OCI-LY7 (cell line): ENCODE measurements at regions of chr15 and their contacts with region 1.

Region 1: DNA sequence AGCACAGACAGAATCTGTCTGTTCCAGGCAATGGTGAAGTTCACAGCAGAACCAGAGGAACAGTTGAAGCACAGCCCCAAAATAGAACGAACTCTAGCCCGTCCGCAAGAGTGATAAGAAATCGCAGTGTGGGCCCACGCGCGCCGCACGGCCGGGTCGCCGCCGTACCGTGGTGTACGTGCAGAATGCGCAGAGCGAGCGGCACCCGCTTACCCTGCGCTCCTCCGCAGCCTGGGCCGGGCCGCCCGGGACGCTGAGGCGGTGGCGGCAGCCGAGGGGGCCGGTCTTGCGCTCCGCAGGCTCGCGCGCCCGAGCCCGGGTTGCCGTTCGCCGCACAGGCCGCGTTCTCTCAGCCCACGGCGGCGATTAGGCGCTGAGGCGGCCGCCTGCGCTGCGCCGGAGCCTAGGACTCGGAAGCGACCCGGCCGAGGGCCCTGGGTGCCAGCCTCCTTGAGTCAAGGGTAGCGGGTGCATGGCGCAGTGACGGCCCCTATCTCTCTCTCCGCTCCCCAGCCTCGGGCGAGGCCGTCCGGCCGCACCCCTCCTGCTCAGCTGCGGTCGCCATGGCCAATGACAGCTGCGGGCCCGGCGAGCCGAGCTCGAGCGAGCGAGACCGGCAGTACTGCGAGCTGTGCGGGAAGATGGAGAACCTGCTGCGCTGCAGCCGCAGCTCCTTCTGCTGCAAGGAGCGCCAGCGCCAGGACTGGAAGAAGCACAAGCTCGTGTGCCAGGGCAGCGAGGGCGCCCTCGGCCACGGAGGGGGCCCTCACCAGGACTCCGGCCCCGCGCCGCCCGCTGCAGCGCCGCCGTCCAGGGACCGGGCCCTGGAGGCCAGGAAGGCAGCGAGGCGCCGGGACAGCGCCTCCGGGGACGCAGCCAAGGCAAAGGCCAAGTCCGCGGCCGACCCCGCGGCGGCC is 20.5 kb downstream of the WDR73 start:
- DNase-seq: peak; percentile 79
- H3K4me3 ChIP-seq: peak overlapping the region; percentile 76
- H3K27ac ChIP-seq: peak overlapping the region; percentile 18
- H3K4me1 ChIP-seq: peaks cover 40% of the 10 kb centered on the region
- CTCF ChIP-seq: 0 out of 2 replicates have a peak, but pooled peaks have one; percentile 16

Region 2: GRCh38 chr15:84570164-84570735 is 63.3 kb before region 1 on chr15:
- CTCF ChIA-PET with region 1: interaction called, 3 read pairs
- POLR2A ChIA-PET with region 1: no interaction called
- intact Hi-C with region 1: loop called (anchors 1 kb)
- DNase-seq: peak; percentile 27
- H3K4me3 ChIP-seq: peak overlapping the region; percentile 73
- H3K27ac ChIP-seq: peak overlapping the region; percentile 25
- H3K4me1 ChIP-seq: no peaks in the 10 kb centered on the region
- CTCF ChIP-seq: no peak

Region 3: DNA sequence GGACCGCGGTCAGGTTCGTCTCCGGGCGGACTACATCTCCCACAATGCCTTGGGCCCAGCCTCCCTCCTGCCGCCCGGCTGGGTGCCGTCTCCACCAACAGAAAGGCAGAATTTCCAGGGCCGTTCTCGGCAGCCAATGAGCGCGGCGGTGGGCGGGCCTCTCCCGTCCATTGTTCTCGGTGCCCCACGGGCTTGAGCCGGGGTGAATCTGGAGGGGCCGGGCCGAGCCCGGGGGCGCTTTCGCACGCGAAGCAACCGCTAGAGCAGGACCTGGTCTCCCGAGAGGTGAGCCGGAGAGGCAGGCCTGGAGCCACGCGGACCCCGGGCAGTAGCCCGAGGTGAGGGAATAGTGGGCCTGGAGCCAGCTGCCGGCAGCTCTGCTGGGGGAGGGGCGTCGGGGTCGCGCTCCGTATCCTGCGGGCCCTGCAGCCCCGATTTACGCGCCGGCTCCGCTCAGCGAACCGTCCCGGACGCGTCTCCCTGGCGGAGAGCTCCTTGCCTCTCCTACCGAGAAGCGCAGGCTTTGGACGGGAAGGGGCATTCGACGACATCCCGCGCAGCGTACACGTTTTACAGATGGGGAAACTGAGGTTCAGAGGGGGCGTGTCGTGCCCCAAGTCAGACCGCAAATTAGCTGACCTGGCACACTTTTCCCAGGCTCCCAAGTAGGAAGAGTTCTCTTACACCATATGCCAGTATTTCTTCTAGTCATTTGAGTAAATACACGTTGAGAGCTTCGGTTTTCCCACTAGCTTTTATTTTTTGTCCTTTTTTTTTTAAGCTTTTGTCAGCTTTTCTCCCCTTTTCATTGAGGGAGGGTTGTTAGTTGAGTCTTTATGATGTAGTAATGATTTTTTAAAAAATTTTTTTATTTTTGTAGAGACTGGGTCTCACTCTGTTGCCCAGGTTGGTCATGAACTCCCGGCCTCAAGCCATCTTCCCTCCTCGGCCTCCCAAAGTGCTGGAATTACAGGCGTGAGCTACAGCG is 32.4 kb before region 1 on chr15 and contains the start of gene ZSCAN2:
- CTCF ChIA-PET with region 1: interaction called, 4 read pairs
- POLR2A ChIA-PET with region 1: interaction called, 5 read pairs
- intact Hi-C with region 1: loop called (anchors 1 kb)
- DNase-seq: peak; percentile 93
- H3K4me3 ChIP-seq: peak within 1 kb of the TSS; percentile 83
- H3K27ac ChIP-seq: no peak within 1 kb of the TSS
- H3K4me1 ChIP-seq: peaks cover 47% of the 10 kb centered on the region
- CTCF ChIP-seq: no peak
- total RNA-seq, gene ZSCAN2: 12.4 and 21.7 TPM in 2 replicates

Region 4: DNA sequence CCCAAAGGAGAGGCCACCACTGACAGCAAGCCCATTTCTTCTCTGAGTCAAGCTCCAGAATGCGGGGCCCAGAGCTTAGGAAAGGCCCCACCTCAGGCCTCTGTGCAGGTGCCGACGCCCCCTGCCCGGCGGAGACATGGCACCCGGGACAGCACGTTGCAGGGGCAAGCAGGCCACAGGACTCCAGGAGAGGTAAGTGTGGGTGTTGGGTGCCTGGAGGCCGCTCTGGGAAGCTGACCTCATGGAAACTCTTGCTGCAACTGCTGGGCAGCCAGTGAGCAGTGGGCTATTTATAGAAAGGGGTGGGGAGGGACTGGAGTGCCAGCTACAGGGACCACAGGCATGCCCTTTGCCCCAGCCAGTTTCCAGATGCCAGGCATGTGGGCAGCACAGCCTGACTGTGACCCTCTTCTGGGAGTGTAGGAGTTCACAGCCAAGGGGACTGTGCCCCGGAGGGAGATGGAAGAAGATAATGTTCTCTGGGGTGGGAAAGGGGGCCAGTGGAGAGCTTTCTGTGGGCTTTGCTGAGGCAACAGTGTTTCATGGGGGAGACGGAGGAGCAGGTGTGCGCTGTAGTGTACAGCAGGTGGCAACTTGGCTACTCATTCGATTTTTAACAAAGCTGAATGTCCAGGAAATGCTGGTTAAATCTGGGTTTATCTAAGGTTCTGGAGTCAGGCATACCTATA is 207.3 kb after region 1 on chr15:
- CTCF ChIA-PET with region 1: no interaction called
- POLR2A ChIA-PET with region 1: no interaction called
- intact Hi-C with region 1: no loop called
- DNase-seq: no peak
- H3K4me3 ChIP-seq: no peak overlapping the region
- H3K27ac ChIP-seq: no peak overlapping the region
- H3K4me1 ChIP-seq: no peaks in the 10 kb centered on the region
- CTCF ChIP-seq: no peak

Region 5: DNA sequence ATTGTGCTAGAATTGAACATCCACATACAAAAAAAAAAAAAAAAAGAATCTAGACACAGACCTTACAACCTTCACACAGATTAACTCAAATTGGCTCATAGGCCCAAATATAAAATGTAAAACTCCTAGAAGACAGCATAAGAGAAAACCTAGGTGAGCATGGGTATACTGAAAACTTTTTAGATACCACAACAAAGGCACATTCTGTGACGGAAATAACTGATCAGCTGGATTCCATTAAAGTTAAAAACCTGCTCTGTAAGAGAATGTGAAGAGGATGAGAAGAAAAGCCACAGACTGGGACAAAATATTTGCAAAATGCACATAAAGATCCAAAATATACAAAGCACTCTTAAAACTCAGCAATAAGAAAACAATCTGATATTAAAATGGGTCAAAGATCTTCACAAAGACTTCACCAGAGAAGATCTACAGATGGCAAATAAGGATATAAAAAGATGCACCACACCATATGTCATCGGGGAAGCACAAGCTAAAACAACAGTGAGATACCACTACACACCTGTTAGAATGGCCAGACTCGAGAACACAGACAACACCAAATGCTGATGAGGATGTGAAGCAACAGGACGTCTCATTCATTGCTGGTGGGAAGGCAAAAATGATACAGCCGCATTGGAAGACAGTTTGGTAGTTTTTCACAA is 516.0 kb after region 1 on chr15:
- CTCF ChIA-PET with region 1: no interaction called
- POLR2A ChIA-PET with region 1: no interaction called
- intact Hi-C with region 1: no loop called
- DNase-seq: no peak
- H3K4me3 ChIP-seq: no peak overlapping the region
- H3K27ac ChIP-seq: no peak overlapping the region
- H3K4me1 ChIP-seq: no peaks in the 10 kb centered on the region
- CTCF ChIP-seq: no peak